Head of caudate nucleus (tissue), 42 donors: ENCODE measurements at regions of chr20 and their contacts with region 1.

Region 1: GRCh38 chr20:20824924-20825584 is 112.6 kb upstream of the RALGAPA2 start:
- DNase-seq: peak; percentile 25 to 86 (median 62)

Region 2: GRCh38 chr20:20664795-20665589 is 160.1 kb before region 1 on chr20:
- intact Hi-C with region 1: loop called (anchors 5 kb)
- DNase-seq: peak in 7 of 42 donors; percentile 11 to 56 (median 26)